Activated T-helper 2 cell treated with anti-CD3 and anti-CD28 coated beads, Interferon-gamma antibody, Interleukin-2, Interleukin-4, amounts not matched to agents 10 μg/mL and 5 μg/mL and 100 μg/mL, durations not matched to agents 14 hours and 24 hours and 36 hours (primary cell): ENCODE measurements at regions of chr14 and their contacts with region 1.

Region 1: GRCh38 chr14:36553656-36554260 is 28.7 kb downstream of the NKX2-8 start:
- DNase-seq: no peak
- H3K4me3 Mint-ChIP-seq: no peak overlapping the region
- H3K27ac Mint-ChIP-seq: no peak overlapping the region
- H3K4me1 Mint-ChIP-seq: no peaks in the 10 kb centered on the region
- H3K27me3 Mint-ChIP-seq: no peaks in the 10 kb centered on the region

Region 2: GRCh38 chr14:36505181-36505815 is 48.5 kb before region 1 on chr14:
- intact Hi-C with region 1: no loop called
- DNase-seq: no peak
- H3K4me3 Mint-ChIP-seq: no peak overlapping the region
- H3K27ac Mint-ChIP-seq: no peak overlapping the region
- H3K4me1 Mint-ChIP-seq: peaks cover 6% of the 10 kb centered on the region
- H3K27me3 Mint-ChIP-seq: peaks cover 85% of the 10 kb centered on the region

Region 3: GRCh38 chr14:36604757-36605505 is 51.2 kb after region 1 on chr14:
- intact Hi-C with region 1: loop called (anchors 1 kb)
- DNase-seq: no peak
- H3K4me3 Mint-ChIP-seq: no peak overlapping the region
- H3K27ac Mint-ChIP-seq: no peak overlapping the region
- H3K4me1 Mint-ChIP-seq: no peaks in the 10 kb centered on the region
- H3K27me3 Mint-ChIP-seq: peaks cover 5% of the 10 kb centered on the region